IMR-90 (cell line): ENCODE measurements at regions of chr9 and their contacts with region 1.

Region 1: GRCh38 chr9:100322954-100323536 is 29.7 kb downstream of the TEX10 start:
- DNase-seq: peak; percentile 51
- ATAC-seq: peak; percentile 66; the same call in 1 of the 2 replicates
- H3K4me3 ChIP-seq: no peak overlapping the region
- H3K27ac ChIP-seq: no peak overlapping the region
- H3K4me1 ChIP-seq: no peaks in the 10 kb centered on the region
- H3K27me3 ChIP-seq: no peaks in the 10 kb centered on the region
- CTCF ChIP-seq: peak; percentile 76
- POLR2A ChIP-seq: no peak
- RAD21 ChIP-seq: peak; percentile 66

Region 2: GRCh38 chr9:99162759-99163364 is 1160.2 kb before region 1 on chr9:
- CTCF ChIA-PET with region 1: no interaction called
- POLR2A ChIA-PET with region 1: no interaction called
- dilution Hi-C with region 1: no loop called
- in situ Hi-C with region 1: no loop called
- intact Hi-C with region 1: loop called (anchors 5 kb)
- DNase-seq: peak; percentile 51
- ATAC-seq: peak; percentile 67
- H3K4me3 ChIP-seq: no peak overlapping the region
- H3K27ac ChIP-seq: no peak overlapping the region
- H3K4me1 ChIP-seq: no peaks in the 10 kb centered on the region; the same call in 1 of the 2 replicates
- H3K27me3 ChIP-seq: peaks cover 7% of the 10 kb centered on the region
- CTCF ChIP-seq: peak; percentile 72
- POLR2A ChIP-seq: no peak
- RAD21 ChIP-seq: peak; percentile 78

Region 3: GRCh38 chr9:99368341-99369323 is 954.4 kb before region 1 on chr9:
- CTCF ChIA-PET with region 1: no interaction called
- POLR2A ChIA-PET with region 1: no interaction called
- dilution Hi-C with region 1: no loop called
- in situ Hi-C with region 1: no loop called
- intact Hi-C with region 1: no loop called
- DNase-seq: peak; percentile 83
- ATAC-seq: peak; percentile 82
- H3K4me3 ChIP-seq: peak overlapping the region; percentile 32
- H3K27ac ChIP-seq: peak overlapping the region; percentile 13
- H3K4me1 ChIP-seq: peaks cover 24% of the 10 kb centered on the region
- H3K27me3 ChIP-seq: no peaks in the 10 kb centered on the region
- CTCF ChIP-seq: no peak
- POLR2A ChIP-seq: 0 out of 2 replicates have a peak, but pooled peaks have one; percentile 11
- RAD21 ChIP-seq: no peak

Region 4: GRCh38 chr9:99807276-99807852 is 515.7 kb before region 1 on chr9:
- CTCF ChIA-PET with region 1: no interaction called
- POLR2A ChIA-PET with region 1: no interaction called
- dilution Hi-C with region 1: no loop called
- in situ Hi-C with region 1: no loop called
- intact Hi-C with region 1: loop called (anchors 5 kb)
- DNase-seq: peak; percentile 59
- ATAC-seq: peak; percentile 82
- H3K4me3 ChIP-seq: no peak overlapping the region
- H3K27ac ChIP-seq: no peak overlapping the region
- H3K4me1 ChIP-seq: no peaks in the 10 kb centered on the region
- H3K27me3 ChIP-seq: no peaks in the 10 kb centered on the region
- CTCF ChIP-seq: peak; percentile 82
- POLR2A ChIP-seq: no peak
- RAD21 ChIP-seq: peak; percentile 65

Region 5: DNA sequence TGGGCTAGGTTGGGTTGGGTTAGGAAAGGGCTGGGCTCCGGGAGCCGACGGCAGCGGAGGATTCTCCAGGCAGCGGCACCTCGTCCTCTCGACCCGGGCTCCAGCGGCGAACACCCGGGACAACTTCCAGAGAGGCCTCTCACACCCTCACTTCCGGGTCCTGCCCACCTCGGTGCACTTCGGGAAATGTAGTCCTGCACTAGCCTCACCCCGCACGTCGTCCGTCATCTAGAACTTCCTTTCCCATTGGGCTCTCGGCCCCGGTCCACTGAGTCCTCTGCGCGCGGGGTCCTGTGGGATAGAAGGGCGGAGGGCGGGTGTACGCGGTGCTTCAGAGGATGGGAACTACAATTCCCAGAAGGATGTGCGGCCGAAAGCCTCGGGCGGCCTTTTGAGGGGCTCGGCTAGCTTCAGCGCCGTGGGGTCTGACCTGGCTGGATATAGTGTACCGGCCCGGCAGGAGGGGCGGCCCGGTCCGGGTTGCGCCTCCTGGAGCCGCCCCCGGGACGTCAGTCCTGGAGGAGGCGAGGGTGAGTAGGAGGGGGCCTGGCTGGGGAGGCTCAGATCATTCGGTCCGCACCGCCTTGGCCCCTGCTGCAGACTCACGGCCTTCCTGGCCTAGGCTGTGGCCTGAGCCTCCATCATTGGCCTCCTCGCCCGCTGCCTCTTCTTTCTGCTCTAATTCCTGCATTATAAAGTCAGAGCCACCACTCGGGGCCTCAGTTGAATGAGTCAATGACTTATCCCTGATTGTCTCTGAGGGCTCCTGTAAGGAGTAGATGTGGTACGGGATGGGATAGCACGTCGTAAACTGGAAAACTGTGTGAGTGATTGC is 223.9 kb before region 1 on chr9 and contains the starts of genes ERP44 and INVS:
- CTCF ChIA-PET with region 1: no interaction called
- POLR2A ChIA-PET with region 1: no interaction called
- dilution Hi-C with region 1: no loop called
- in situ Hi-C with region 1: no loop called
- intact Hi-C with region 1: loop called (anchors 5 kb)
- DNase-seq: peak; percentile 99
- ATAC-seq: peak; percentile 99
- H3K4me3 ChIP-seq: peak within 1 kb of the TSS; percentile 88
- H3K27ac ChIP-seq: peak within 1 kb of the TSS; percentile 77
- H3K4me1 ChIP-seq: peaks cover 2% of the 10 kb centered on the region; the same call in 1 of the 2 replicates
- H3K27me3 ChIP-seq: no peaks in the 10 kb centered on the region
- CTCF ChIP-seq: no peak
- POLR2A ChIP-seq: peak; percentile 89
- RAD21 ChIP-seq: no peak
- total RNA-seq, gene ERP44: 9.1 and 16.1 TPM in 2 replicates
- total RNA-seq, gene INVS: 25.3 and 33.5 TPM in 2 replicates

Region 6: GRCh38 chr9:100294341-100294740 is 28.7 kb before region 1 on chr9:
- CTCF ChIA-PET with region 1: no interaction called
- POLR2A ChIA-PET with region 1: no interaction called
- dilution Hi-C with region 1: no loop called
- in situ Hi-C with region 1: no loop called
- intact Hi-C with region 1: no loop called
- DNase-seq: peak; percentile 65
- ATAC-seq: no peak
- H3K4me3 ChIP-seq: no peak overlapping the region
- H3K27ac ChIP-seq: no peak overlapping the region
- H3K4me1 ChIP-seq: no peaks in the 10 kb centered on the region
- H3K27me3 ChIP-seq: no peaks in the 10 kb centered on the region
- CTCF ChIP-seq: no peak
- POLR2A ChIP-seq: no peak
- RAD21 ChIP-seq: no peak

Region 7: DNA sequence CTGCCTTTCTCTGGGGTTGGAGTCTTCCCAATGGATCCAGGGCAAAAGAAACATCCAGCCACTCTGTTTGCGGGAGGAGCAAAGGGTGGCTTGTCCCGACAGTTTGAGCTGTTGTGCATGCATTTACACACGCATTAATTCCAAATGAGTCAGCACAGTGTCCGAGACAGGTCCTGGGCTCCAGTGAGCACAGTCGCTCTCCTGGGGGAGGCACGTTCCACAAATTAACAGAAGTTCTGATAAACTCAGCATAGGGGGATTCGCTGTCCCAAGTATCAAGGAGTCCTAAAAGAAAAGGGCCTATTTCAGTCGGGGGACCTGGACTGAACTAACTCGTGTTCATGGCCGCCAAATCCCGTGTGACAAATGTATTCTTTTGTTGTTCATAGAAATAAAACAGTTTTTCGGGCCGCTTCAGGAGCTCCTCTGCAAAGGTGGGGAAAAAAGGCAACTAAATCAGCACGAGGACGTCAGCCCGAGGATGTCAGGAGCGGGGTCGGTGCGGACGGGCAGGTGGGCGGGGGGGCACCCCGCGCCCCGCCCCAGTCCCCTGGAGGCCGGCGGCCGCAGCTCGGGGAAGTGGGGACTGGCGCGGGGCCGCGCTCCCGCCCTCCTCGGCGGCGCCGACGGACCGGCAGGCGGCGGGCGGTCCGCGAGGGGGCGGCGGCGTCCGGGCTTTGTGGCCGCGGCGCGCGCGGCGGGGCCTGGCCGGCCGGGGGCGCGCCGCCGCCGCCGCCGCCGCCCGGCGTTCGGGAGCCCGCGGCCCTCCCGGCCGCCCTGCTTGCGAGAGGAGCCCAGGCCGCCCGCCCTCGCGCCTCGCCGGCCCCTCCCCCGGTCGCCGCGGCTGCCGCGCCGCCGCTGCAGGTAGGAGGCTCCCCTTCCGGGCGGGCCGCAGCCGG is 103.7 kb after region 1 on chr9 and contains the start of gene MSANTD3:
- CTCF ChIA-PET with region 1: no interaction called
- POLR2A ChIA-PET with region 1: no interaction called
- dilution Hi-C with region 1: no loop called
- in situ Hi-C with region 1: no loop called
- intact Hi-C with region 1: loop called (anchors 5 kb)
- DNase-seq: peak; percentile 76
- ATAC-seq: peak; percentile 64
- H3K4me3 ChIP-seq: peak within 1 kb of the TSS; percentile 66
- H3K27ac ChIP-seq: peak within 1 kb of the TSS; percentile 95
- H3K4me1 ChIP-seq: peaks cover 17% of the 10 kb centered on the region
- H3K27me3 ChIP-seq: no peaks in the 10 kb centered on the region
- CTCF ChIP-seq: peak; percentile 31
- POLR2A ChIP-seq: peak; percentile 90
- RAD21 ChIP-seq: no peak; the same call in 1 of the 2 replicates
- total RNA-seq, gene MSANTD3: 55.9 and 71.1 TPM in 2 replicates